ENCODE measurements at regions of chr3 and their contacts with region 1.

Region 1: GRCh38 chr3:128680602-128681368 is 30.2 kb upstream of the RPN1 start:
- DNase-seq: peak; percentile 98
- ATAC-seq: peak; percentile 98
- H3K4me3 Mint-ChIP-seq: peak overlapping the region; percentile 90
- H3K27ac Mint-ChIP-seq: peak overlapping the region; percentile 99
- H3K4me1 Mint-ChIP-seq: peaks cover 39% of the 10 kb centered on the region
- H3K27me3 Mint-ChIP-seq: peaks cover 8% of the 10 kb centered on the region

Region 2: DNA sequence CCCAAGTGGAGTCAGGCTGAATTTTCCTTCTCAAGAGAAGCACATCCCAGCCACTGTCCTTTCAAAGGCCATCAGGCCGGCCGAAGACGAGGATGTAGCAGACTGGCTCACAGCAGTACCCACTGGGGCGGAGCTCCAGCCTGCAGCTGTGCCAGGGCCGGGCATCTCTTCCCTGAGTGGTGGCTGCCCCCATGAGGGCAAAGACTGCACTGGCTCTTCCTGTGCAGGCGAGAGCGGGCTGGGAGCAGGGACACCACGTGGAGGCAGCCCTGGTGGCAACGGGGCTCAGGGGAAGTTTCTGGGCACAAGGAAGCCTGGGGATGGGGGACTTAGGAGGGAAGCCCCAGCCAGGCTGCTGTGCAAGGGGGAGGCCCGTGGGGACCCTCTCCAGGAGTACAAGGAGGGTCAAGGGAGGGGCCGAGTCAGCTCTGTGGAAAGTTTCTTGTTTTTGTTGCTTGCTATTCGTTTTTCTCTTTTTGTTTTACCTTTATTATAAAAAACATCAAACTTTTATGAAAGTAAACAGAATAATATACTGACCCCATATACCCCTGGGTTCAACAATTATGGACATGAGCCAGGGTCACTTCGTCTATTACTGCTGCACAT is 96.3 kb before region 1 on chr3:
- CTCF ChIA-PET with region 1: no interaction called
- POLR2A ChIA-PET with region 1: no interaction called
- DNase-seq: peak; percentile 56
- ATAC-seq: peak; percentile 92
- H3K4me3 Mint-ChIP-seq: no peak overlapping the region
- H3K27ac Mint-ChIP-seq: no peak overlapping the region
- H3K4me1 Mint-ChIP-seq: peaks cover 4% of the 10 kb centered on the region
- H3K27me3 Mint-ChIP-seq: peaks cover 11% of the 10 kb centered on the region

Region 3: GRCh38 chr3:128617557-128618397 is 63.0 kb before region 1 on chr3:
- CTCF ChIA-PET with region 1: interaction called, 25 read pairs
- POLR2A ChIA-PET with region 1: interaction called, 3 read pairs
- DNase-seq: peak; percentile 99
- ATAC-seq: peak; percentile 94
- H3K4me3 Mint-ChIP-seq: peak overlapping the region; percentile 85
- H3K27ac Mint-ChIP-seq: peak overlapping the region; percentile 88
- H3K4me1 Mint-ChIP-seq: peaks cover 46% of the 10 kb centered on the region
- H3K27me3 Mint-ChIP-seq: no peaks in the 10 kb centered on the region

Region 4: DNA sequence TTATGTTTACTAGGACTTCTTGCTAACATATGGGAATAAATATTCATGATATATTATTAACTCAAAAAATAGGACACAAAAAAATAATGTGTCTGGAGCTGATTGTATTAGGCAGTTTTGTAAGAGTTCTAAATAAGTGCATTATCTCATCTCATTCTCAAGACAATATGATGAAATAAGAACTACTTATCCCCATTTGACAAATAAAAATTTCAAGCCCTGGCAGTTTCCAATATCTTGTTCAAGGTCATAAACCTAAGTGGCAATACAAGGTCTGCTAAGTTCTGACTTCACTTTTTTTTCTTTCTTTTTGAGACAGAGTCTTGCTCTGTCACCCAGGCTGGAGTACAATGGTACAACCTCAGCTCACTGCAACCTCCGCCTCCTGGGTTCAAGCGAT is 48.5 kb before region 1 on chr3:
- CTCF ChIA-PET with region 1: no interaction called
- POLR2A ChIA-PET with region 1: no interaction called
- DNase-seq: no peak
- ATAC-seq: no peak
- H3K4me3 Mint-ChIP-seq: no peak overlapping the region
- H3K27ac Mint-ChIP-seq: no peak overlapping the region
- H3K4me1 Mint-ChIP-seq: no peaks in the 10 kb centered on the region
- H3K27me3 Mint-ChIP-seq: no peaks in the 10 kb centered on the region

Region 5: GRCh38 chr3:128725932-128726690 is 45.3 kb after region 1 on chr3 and contains the start of gene RAB7A:
- CTCF ChIA-PET with region 1: interaction called, 47 read pairs
- POLR2A ChIA-PET with region 1: interaction called, 19 read pairs
- DNase-seq: peak; percentile 98
- ATAC-seq: peak; percentile 95
- H3K4me3 Mint-ChIP-seq: peak within 1 kb of the TSS; percentile 86
- H3K27ac Mint-ChIP-seq: peak within 1 kb of the TSS; percentile 91
- H3K4me1 Mint-ChIP-seq: peaks cover 48% of the 10 kb centered on the region
- H3K27me3 Mint-ChIP-seq: peaks cover 6% of the 10 kb centered on the region
- total RNA-seq, gene RAB7A: 256 to 269 TPM

Region 6: DNA sequence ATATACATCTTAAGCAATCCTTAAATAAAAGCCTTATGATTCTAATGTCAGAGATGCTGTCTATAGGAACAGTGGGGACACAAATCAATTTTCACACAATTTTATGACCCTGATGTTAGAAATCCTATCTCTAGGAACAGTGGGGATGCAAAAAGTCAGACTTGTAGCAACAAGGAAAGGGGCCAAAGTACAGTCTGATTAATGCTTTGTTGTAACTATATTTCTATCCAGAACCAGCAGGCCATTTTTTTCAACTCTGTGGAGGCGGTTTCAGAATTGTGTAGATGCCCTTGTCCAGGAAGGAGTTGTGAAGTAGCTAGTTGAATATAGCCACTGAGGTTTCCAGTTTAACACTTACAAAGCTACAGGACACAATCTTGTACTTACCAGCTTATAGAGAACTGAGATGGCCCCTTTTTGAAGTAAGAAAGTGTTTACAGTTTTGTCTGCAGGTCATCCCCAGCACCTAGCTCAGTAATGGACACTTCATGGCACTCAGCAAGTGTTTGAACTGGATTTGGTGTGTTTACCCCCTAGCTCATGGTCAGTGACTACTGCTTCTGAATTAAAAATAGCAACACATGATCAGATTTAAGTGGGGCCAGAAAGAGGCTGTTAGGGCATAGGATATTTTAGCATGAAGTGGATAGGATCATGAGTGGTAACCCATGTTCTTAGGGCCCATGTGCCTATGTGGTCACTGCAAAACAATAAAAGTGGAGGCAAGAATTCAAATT is 99.5 kb after region 1 on chr3:
- CTCF ChIA-PET with region 1: interaction called, 12 read pairs
- POLR2A ChIA-PET with region 1: interaction called, 3 read pairs
- DNase-seq: no peak
- ATAC-seq: no peak
- H3K4me3 Mint-ChIP-seq: no peak overlapping the region
- H3K27ac Mint-ChIP-seq: no peak overlapping the region
- H3K4me1 Mint-ChIP-seq: peaks cover 62% of the 10 kb centered on the region
- H3K27me3 Mint-ChIP-seq: no peaks in the 10 kb centered on the region

Region 7: GRCh38 chr3:128804017-128804810 is 123.4 kb after region 1 on chr3:
- CTCF ChIA-PET with region 1: interaction called, 256 read pairs
- POLR2A ChIA-PET with region 1: interaction called, 7 read pairs
- DNase-seq: peak; percentile 82
- ATAC-seq: peak; percentile 89
- H3K4me3 Mint-ChIP-seq: peak overlapping the region; percentile 71
- H3K27ac Mint-ChIP-seq: peak overlapping the region; percentile 90
- H3K4me1 Mint-ChIP-seq: peaks cover 68% of the 10 kb centered on the region
- H3K27me3 Mint-ChIP-seq: no peaks in the 10 kb centered on the region

Region 8: GRCh38 chr3:128922804-128923459 is 242.1 kb after region 1 on chr3:
- CTCF ChIA-PET with region 1: interaction called, 13 read pairs
- POLR2A ChIA-PET with region 1: no interaction called
- DNase-seq: peak; percentile 76
- ATAC-seq: peak; percentile 73
- H3K4me3 Mint-ChIP-seq: peak overlapping the region; percentile 70
- H3K27ac Mint-ChIP-seq: peak overlapping the region; percentile 81
- H3K4me1 Mint-ChIP-seq: peaks cover 29% of the 10 kb centered on the region
- H3K27me3 Mint-ChIP-seq: peaks cover 3% of the 10 kb centered on the region

Region 9: DNA sequence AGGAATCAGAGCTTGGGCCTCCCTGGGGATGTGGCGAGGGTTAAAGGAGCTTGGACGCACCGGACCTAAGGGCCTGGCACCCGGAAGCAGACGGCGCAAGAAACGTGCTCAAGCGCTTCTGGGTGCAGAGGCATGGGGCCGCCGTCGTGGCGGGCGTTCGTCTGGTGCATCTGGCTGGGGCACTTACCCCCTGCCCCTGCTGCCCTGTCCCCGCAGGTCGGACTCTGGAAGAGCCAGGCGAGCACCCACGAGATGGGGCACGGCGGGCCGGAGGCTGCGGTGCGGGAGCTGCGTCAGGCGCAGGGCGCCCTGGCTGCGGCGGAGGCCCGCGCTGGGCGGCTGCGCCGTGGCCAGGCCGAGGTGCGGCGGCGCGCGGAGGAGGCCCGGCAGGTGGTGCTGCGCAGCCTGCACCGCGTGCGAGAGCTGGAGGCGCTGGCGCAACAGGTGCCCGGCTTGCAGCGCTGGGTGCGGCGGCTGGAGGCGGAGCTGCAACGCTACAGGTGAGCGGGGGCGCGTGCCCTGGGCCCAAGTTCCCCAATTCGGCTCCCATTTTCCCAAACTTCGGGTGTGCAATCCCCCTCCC is 322.9 kb after region 1 on chr3:
- CTCF ChIA-PET with region 1: no interaction called
- POLR2A ChIA-PET with region 1: no interaction called
- DNase-seq: peak; percentile 58
- ATAC-seq: peak; percentile 79
- H3K4me3 Mint-ChIP-seq: peak overlapping the region; percentile 10
- H3K27ac Mint-ChIP-seq: no peak overlapping the region
- H3K4me1 Mint-ChIP-seq: peaks cover 50% of the 10 kb centered on the region
- H3K27me3 Mint-ChIP-seq: peaks cover 39% of the 10 kb centered on the region